Heart right ventricle (tissue), 16 donors: ENCODE measurements at regions of chr10 and their contacts with region 1.

Region 1: GRCh38 chr10:108970016-108970415 is 953.3 kb downstream of the XPNPEP1 start:
- DNase-seq: no peak
- ATAC-seq: no peak
- H3K4me3 ChIP-seq: no peak overlapping the region
- H3K27ac ChIP-seq: no peak overlapping the region
- H3K4me1 ChIP-seq: no peaks in the 10 kb centered on the region
- H3K27me3 ChIP-seq: no peaks in the 10 kb centered on the region
- CTCF ChIP-seq: no peak

Region 2: DNA sequence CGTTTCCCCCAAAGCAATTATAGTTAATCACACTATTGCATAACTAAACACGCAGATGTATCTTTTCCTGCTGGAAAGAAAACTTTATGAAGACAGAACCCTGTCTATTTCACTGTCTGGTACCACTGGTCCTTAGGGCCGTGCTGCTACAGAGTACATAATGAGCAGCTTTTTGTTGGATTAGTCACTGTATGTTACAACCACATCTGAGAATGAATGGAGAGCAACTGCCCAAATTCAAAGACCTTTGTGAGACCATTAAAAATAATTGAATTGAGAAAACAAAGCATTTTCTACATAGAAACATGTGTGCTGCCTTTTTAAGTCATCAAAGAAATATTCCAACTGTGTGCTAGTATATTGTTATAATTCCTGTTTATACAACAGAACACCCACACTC is 1694.2 kb before region 1 on chr10:
- intact Hi-C with region 1: loop called in 1 of 10 experiments (anchors 5 kb)
- DNase-seq: no peak
- ATAC-seq: no peak
- H3K4me3 ChIP-seq: no peak overlapping the region
- H3K27ac ChIP-seq: no peak overlapping the region
- H3K4me1 ChIP-seq: no peaks in the 10 kb centered on the region
- H3K27me3 ChIP-seq: no peaks in the 10 kb centered on the region
- CTCF ChIP-seq: no peak

Region 3: DNA sequence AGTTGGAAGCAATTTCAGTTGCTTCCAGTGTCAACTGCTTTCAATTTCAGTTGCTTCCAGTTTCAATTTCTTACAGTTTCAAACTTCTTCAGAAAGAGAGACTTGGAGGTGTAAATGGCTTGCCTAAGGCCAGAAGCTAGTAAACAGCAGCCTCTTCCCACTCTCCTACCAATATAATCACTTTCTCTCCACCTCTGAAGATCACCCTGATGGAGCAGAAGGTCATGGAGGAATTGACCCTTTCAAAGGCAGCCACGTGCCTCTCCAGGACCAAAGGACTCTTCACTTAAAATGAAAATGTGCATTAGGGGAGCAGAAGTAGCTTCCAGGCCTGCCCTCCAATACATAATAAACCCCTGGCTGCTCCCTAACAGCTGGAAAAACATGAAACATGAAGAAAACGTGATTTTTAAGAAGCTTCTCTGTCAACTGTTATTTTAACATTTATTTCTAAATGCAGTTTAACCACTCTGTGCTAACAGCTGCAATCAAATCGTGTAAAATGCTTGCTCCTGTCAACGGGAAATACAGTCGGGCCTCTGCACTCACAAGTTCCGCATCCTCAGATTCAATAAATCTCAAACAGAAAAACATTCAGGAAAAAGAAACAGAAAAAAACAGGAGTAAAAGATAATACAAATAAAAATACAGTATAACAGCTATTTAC is 67.3 kb before region 1 on chr10:
- intact Hi-C with region 1: no loop called
- DNase-seq: no peak
- ATAC-seq: no peak
- H3K4me3 ChIP-seq: no peak overlapping the region
- H3K27ac ChIP-seq: peak overlapping the region in 3 of 10 donors; percentile 10 to 15 (median 13)
- H3K4me1 ChIP-seq: peaks cover 0 to 4% (median 0%) of the 10 kb centered on the region in 9 donors
- H3K27me3 ChIP-seq: peaks cover 0 to 9% (median 0%) of the 10 kb centered on the region in 7 donors
- CTCF ChIP-seq: no peak

Region 4: DNA sequence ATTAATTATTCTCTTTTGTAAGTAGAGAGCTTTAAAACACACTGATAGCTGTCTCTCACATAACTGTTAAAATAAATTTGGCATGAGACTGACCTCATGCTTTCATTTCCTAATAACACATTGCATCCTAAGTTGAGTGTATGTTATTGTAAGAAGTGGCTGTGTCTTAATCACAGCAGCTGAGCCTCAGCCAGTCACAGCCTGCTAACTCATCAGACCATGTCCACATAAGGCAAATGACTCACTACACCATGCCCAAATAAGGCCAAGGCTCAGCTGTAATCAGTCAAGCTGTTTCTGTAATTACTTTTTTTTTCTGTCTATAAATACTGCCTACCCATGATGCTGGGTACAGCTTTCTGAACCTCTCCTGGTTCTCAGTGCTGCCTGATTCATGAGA is 92.4 kb after region 1 on chr10:
- intact Hi-C with region 1: no loop called
- DNase-seq: no peak
- ATAC-seq: no peak
- H3K4me3 ChIP-seq: no peak overlapping the region
- H3K27ac ChIP-seq: no peak overlapping the region
- H3K4me1 ChIP-seq: no peaks in the 10 kb centered on the region
- H3K27me3 ChIP-seq: no peaks in the 10 kb centered on the region
- CTCF ChIP-seq: no peak